Mammary epithelial cell (primary cell): ENCODE measurements at regions of chr3 and their contacts with region 1.

Region 1: DNA sequence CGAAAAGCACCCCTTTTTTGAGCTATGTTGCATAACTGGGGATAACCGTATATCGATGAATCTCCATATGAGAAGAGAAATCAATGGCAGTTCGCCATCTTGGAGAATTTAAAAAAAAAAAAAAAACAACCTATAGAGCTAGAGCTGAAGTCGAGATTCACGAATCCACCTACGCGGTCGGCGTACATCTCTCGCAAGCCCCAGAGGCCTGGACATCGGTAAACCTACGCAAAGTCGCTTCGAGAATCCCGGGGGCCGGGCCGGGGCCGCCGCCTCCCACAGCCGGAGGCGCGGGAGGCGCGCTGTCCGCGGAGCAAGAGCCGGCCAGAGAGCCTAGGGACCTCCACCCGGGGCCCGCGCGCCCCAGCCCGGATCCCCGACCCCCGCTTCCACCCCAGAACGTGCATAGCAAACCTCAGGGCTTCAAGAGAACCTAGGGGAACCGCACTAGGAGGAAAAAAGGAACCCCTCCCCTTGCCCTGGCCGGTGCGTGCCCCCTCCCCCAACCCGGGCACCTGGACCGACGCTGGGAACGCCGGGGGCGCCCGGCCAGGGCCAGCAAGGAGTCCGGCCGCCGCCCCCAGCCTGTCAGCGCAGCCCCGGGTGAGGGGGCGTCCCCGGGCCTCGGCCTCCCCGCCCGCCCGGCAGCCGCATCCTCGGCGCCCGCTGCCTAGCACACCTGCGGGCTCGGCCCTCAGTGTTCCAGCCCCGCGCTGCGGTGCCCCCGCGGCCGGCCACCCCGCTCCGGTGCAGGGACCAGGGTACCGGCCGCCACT is 567 bp downstream of the PFN2 start:
- DNase-seq: peak; percentile 79
- H3K4me3 ChIP-seq: peak overlapping the region; percentile 86 to 94 (median 89)
- H3K27ac ChIP-seq: peak overlapping the region; percentile 94
- H3K4me1 ChIP-seq: peaks cover 24% of the 10 kb centered on the region
- H3K27me3 ChIP-seq: no peaks in the 10 kb centered on the region
- CTCF ChIP-seq: no peak

Region 2: GRCh38 chr3:149783576-149783975 is 186.6 kb before region 1 on chr3:
- CTCF ChIA-PET with region 1: no interaction called
- dilution Hi-C with region 1: no loop called
- in situ Hi-C with region 1: no loop called
- intact Hi-C with region 1: no loop called
- DNase-seq: peak; percentile 33
- H3K4me3 ChIP-seq: no peak overlapping the region
- H3K27ac ChIP-seq: peak overlapping the region; percentile 34
- H3K4me1 ChIP-seq: peaks cover 17% of the 10 kb centered on the region
- H3K27me3 ChIP-seq: no peaks in the 10 kb centered on the region
- CTCF ChIP-seq: no peak

Region 3: DNA sequence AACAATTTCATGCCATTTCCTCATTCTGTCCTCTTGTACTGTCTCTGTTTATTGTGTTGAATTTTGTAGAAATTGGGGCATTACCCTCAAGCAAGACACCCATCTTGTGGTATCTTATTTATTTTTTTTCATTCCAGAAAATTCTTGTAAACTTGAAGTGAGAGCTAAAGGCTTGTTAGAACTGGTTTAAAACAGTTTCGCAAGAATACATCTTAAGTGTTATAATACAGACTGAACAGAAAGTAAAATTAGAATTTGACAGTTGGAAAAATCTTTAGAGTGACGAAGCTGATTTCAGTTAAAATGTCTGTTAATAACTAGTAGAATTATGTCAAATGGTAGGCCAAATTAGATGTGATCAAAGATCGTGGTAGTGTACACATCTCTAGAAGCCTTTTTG is 130.2 kb before region 1 on chr3:
- CTCF ChIA-PET with region 1: no interaction called
- dilution Hi-C with region 1: no loop called
- in situ Hi-C with region 1: no loop called
- intact Hi-C with region 1: no loop called
- DNase-seq: peak; percentile 57
- H3K4me3 ChIP-seq: peak overlapping the region in 1 of 3 experiments; percentile 18
- H3K27ac ChIP-seq: peak overlapping the region; percentile 19
- H3K4me1 ChIP-seq: peaks cover 7% of the 10 kb centered on the region
- H3K27me3 ChIP-seq: no peaks in the 10 kb centered on the region
- CTCF ChIP-seq: no peak

Region 4: GRCh38 chr3:149936812-149937233 is 33.3 kb before region 1 on chr3:
- CTCF ChIA-PET with region 1: no interaction called
- dilution Hi-C with region 1: no loop called
- in situ Hi-C with region 1: no loop called
- intact Hi-C with region 1: loop called (anchors 1 kb)
- DNase-seq: peak; percentile 32
- H3K4me3 ChIP-seq: no peak overlapping the region
- H3K27ac ChIP-seq: no peak overlapping the region
- H3K4me1 ChIP-seq: no peaks in the 10 kb centered on the region
- H3K27me3 ChIP-seq: no peaks in the 10 kb centered on the region
- CTCF ChIP-seq: peak; percentile 78 to 81

Region 5: GRCh38 chr3:150049317-150049716 is 79.2 kb after region 1 on chr3:
- CTCF ChIA-PET with region 1: no interaction called
- dilution Hi-C with region 1: no loop called
- in situ Hi-C with region 1: no loop called
- intact Hi-C with region 1: no loop called
- DNase-seq: no peak
- H3K4me3 ChIP-seq: no peak overlapping the region
- H3K27ac ChIP-seq: no peak overlapping the region
- H3K4me1 ChIP-seq: no peaks in the 10 kb centered on the region
- H3K27me3 ChIP-seq: no peaks in the 10 kb centered on the region
- CTCF ChIP-seq: no peak

Region 6: DNA sequence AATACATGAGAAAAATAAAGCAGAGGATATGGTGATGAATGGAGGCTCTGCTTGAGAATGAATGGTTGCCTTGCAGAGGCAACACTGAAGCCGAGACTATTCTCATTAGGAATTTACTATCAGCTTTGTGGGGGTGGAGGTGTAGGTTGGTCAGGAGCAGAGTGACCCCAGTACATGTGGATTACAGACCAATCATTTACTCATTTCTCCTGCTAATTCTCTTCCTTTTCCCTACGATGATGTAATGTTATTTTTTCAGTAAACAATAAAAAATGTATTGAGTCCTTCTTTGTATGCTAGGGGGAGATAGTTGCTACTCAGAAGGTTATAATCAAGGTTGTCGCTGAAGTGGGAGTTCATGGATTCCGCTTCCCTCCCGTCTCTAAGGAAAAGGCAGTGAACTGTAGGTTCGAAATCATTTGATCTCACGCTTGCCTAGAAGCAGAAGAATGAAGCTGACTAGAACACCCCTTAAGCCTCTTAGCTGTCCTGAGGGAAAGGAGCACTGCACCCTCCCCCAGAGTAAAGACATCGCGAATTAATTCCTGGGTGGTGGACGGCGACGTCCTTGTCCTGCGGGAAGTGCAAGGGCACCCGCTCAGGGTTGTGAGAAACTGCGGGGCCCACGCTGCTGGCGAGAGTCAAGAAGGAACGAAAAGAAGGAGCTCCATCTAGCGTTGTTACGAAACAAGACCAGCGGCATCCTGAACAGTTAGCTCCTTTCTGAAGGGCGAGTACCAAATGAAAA is 213.7 kb after region 1 on chr3:
- CTCF ChIA-PET with region 1: interaction called, 11 read pairs
- dilution Hi-C with region 1: no loop called
- in situ Hi-C with region 1: loop called (anchors 5 to 10 kb)
- intact Hi-C with region 1: loop called (anchors 1 kb)
- DNase-seq: peak; percentile 68
- H3K4me3 ChIP-seq: peak overlapping the region; percentile 10 to 44 (median 29)
- H3K27ac ChIP-seq: no peak overlapping the region
- H3K4me1 ChIP-seq: peaks cover 12% of the 10 kb centered on the region
- H3K27me3 ChIP-seq: no peaks in the 10 kb centered on the region
- CTCF ChIP-seq: peak; percentile 57 to 79

Region 7: GRCh38 chr3:150495563-150496168 is 525.5 kb after region 1 on chr3:
- CTCF ChIA-PET with region 1: no interaction called
- dilution Hi-C with region 1: no loop called
- in situ Hi-C with region 1: loop called in 1 of 2 experiments (anchors 25 kb)
- intact Hi-C with region 1: loop called (anchors 2 kb)
- DNase-seq: peak; percentile 29
- H3K4me3 ChIP-seq: no peak overlapping the region
- H3K27ac ChIP-seq: no peak overlapping the region
- H3K4me1 ChIP-seq: no peaks in the 10 kb centered on the region
- H3K27me3 ChIP-seq: no peaks in the 10 kb centered on the region
- CTCF ChIP-seq: peak; percentile 59 to 60

Region 8: GRCh38 chr3:150546226-150547044 is 576.3 kb after region 1 on chr3 and contains the starts of genes EIF2A and SERP1:
- CTCF ChIA-PET with region 1: no interaction called
- dilution Hi-C with region 1: no loop called
- in situ Hi-C with region 1: loop called in 1 of 2 experiments (anchors 25 kb)
- intact Hi-C with region 1: no loop called
- DNase-seq: peak; percentile 99
- H3K4me3 ChIP-seq: peak within 1 kb of the TSS; percentile 96 to 99 (median 97)
- H3K27ac ChIP-seq: peak within 1 kb of the TSS; percentile 96
- H3K4me1 ChIP-seq: peaks cover 14% of the 10 kb centered on the region
- H3K27me3 ChIP-seq: no peaks in the 10 kb centered on the region
- CTCF ChIP-seq: no peak
- total RNA-seq, gene EIF2A: 76.6 to 140 TPM
- total RNA-seq, gene SERP1: 95.2 to 140 TPM

Region 9: GRCh38 chr3:150556792-150557191 is 586.7 kb after region 1 on chr3:
- CTCF ChIA-PET with region 1: no interaction called
- dilution Hi-C with region 1: no loop called
- in situ Hi-C with region 1: no loop called
- intact Hi-C with region 1: no loop called
- DNase-seq: no peak
- H3K4me3 ChIP-seq: no peak overlapping the region
- H3K27ac ChIP-seq: no peak overlapping the region
- H3K4me1 ChIP-seq: no peaks in the 10 kb centered on the region
- H3K27me3 ChIP-seq: no peaks in the 10 kb centered on the region
- CTCF ChIP-seq: no peak